ENCODE measurements at regions of chr4 and their contacts with region 1.

Region 1: DNA sequence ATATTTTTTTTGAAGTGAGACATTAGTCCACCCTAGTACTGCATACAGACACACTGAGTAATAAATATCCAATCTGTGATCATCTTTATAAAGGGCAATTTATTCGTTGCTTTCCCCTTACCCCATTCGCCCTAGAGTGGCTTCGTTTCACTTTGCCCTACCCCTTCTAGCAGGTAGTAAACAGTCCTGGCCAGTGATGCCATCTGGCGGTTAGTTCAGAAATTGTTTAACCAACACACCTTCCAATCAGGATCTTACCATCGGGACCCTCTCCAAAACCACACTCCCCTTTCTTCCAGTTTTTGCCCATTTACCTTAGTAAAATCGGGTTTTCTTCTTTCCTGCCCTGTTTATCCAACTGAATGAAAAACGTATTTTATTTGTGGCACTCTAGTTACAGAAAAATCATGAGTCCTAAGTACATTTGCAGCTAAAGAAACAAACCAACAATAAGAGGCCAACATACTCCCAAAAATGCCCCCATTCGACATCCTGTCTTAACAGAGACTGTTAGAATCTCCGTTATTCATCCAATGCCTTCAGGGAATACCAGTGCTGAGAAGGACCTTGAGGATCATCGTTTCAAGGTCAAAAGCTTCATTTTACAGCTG is 2.2 kb downstream of the PPA2 start:
- DNase-seq: peak; percentile 66
- ATAC-seq: peak; percentile 61
- H3K4me3 ChIP-seq: peak overlapping the region; percentile 93
- H3K27ac ChIP-seq: peak overlapping the region; percentile 92
- H3K4me1 ChIP-seq: no peaks in the 10 kb centered on the region
- H3K27me3 ChIP-seq: no peaks in the 10 kb centered on the region
- CTCF ChIP-seq: peak; percentile 71 to 83 (median 74)
- EP300 ChIP-seq: no peak
- POLR2A ChIP-seq: no peak
- RAD21 ChIP-seq: peak; percentile 95

Region 2: DNA sequence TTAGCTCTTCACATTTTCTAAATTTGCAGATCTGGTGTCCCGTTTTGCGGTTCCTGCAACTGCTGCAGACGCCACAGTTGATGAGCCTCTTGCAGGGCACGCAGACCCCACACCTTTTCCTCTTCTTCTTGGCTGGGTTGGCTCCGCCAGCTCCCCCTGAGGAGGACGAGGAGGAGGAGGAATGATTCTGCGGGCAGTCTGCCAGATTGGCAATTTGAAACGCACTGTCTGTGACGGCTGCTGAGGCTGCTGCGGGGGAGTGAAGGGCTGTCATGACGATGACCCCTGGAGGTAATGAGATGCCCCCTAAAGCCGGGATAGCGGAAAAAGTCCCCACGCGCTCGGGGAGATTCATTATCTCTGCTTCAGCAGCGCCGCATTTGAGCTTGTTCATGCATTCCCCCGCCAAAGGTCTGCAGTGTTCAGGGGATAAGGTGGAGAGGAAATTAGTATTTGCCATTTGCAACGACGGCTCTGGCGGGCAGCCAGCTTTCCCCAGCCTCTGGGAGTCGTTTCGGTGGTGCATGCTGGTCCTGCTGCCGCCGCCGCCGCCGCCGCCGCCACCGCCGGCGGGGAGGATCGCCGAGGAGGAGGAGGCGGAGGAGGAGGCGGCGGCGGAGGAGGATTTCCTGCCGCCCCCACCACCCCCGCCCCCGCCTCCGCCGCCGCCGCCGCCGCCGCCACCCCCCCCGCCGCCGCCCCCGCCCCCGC is 980.7 kb before region 1 on chr4:
- CTCF ChIA-PET with region 1: no interaction called
- POLR2A ChIA-PET with region 1: no interaction called
- RAD21 ChIA-PET with region 1: no interaction called
- SMC1A ChIA-PET with region 1: interaction called, 3 read pairs
- in situ Hi-C with region 1: no loop called
- intact Hi-C with region 1: loop called (anchors 5 kb)
- DNase-seq: no peak
- ATAC-seq: peak; percentile 7
- H3K4me3 ChIP-seq: peak overlapping the region; percentile 78
- H3K27ac ChIP-seq: peak overlapping the region; percentile 97
- H3K4me1 ChIP-seq: peaks cover 16% of the 10 kb centered on the region
- H3K27me3 ChIP-seq: no peaks in the 10 kb centered on the region
- CTCF ChIP-seq: no peak
- EP300 ChIP-seq: no peak
- POLR2A ChIP-seq: peak; percentile 63
- RAD21 ChIP-seq: no peak

Region 3: DNA sequence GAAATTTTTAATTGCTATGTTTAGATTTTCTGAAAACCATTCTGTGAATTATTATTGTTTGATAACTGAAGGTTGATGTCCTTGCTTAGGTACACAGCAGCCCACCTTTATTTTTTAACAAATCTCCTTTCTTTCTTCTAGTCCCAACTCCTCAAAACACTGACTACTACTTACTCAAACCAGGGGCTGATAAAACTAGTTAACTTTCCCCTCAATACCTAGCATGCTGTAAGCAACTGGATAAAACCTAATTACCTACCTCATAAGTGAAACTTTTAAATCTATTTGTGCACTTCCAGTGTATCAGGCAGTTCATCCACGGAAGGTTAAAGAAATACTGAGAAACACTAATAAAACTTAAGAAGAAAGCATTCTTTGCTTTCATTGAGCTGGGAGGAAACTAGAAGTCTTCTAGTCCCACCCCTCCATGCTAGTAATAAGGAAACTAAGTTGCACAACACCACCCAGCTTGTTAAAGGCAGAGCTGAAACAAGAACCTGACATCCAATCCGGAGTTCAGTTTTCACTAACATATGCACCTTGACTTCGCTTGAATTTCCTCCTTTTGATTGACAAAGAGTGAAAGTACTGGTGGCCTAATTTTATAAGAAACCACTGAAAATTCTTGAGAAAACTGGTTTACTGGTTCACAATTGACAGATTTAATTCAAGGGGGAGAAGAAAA is 505.2 kb before region 1 on chr4:
- CTCF ChIA-PET with region 1: interaction called, 3 read pairs
- POLR2A ChIA-PET with region 1: no interaction called
- RAD21 ChIA-PET with region 1: no interaction called
- SMC1A ChIA-PET with region 1: no interaction called
- in situ Hi-C with region 1: no loop called
- intact Hi-C with region 1: loop called (anchors 2 kb)
- DNase-seq: peak; percentile 96
- ATAC-seq: peak; percentile 95
- H3K4me3 ChIP-seq: peak overlapping the region; percentile 51; the same call in 1 of the 2 replicates
- H3K27ac ChIP-seq: peak overlapping the region; percentile 91
- H3K4me1 ChIP-seq: peaks cover 35% of the 10 kb centered on the region
- H3K27me3 ChIP-seq: no peaks in the 10 kb centered on the region
- CTCF ChIP-seq: no peak
- EP300 ChIP-seq: peak in 1 of 2 experiments; percentile 40; a peak in 1 of 4 replicates
- POLR2A ChIP-seq: no peak
- RAD21 ChIP-seq: peak; percentile 23; the same call in 1 of the 2 replicates

Region 4: GRCh38 chr4:105146276-105147015 is 325.2 kb before region 1 on chr4 and contains the start of gene TET2:
- CTCF ChIA-PET with region 1: interaction called, 51 read pairs
- POLR2A ChIA-PET with region 1: interaction called, 7 read pairs
- RAD21 ChIA-PET with region 1: interaction called, 22 read pairs
- SMC1A ChIA-PET with region 1: interaction called, 41 read pairs
- in situ Hi-C with region 1: no loop called
- intact Hi-C with region 1: loop called (anchors 1 kb)
- DNase-seq: peak; percentile 74
- ATAC-seq: peak; percentile 80
- H3K4me3 ChIP-seq: peak within 1 kb of the TSS; percentile 99
- H3K27ac ChIP-seq: peak within 1 kb of the TSS; percentile 96
- H3K4me1 ChIP-seq: no peaks in the 10 kb centered on the region
- H3K27me3 ChIP-seq: no peaks in the 10 kb centered on the region
- CTCF ChIP-seq: peak in 1 of 3 experiments; percentile 8; a peak in 1 of 6 replicates
- EP300 ChIP-seq: no peak; a peak in 1 of 4 replicates
- POLR2A ChIP-seq: peak; percentile 76
- RAD21 ChIP-seq: no peak; the same call in 1 of the 2 replicates
- polyA plus RNA-seq, gene TET2: 3.7 to 6.6 TPM

Region 5: GRCh38 chr4:105453550-105454205 is 18.0 kb before region 1 on chr4:
- CTCF ChIA-PET with region 1: interaction called, 28 read pairs
- POLR2A ChIA-PET with region 1: interaction called, 4 read pairs
- RAD21 ChIA-PET with region 1: interaction called, 10 read pairs
- SMC1A ChIA-PET with region 1: interaction called, 6 read pairs
- in situ Hi-C with region 1: no loop called
- intact Hi-C with region 1: no loop called
- DNase-seq: no peak
- ATAC-seq: peak; percentile 95
- H3K4me3 ChIP-seq: no peak overlapping the region
- H3K27ac ChIP-seq: no peak overlapping the region; the same call in 1 of the 2 replicates
- H3K4me1 ChIP-seq: no peaks in the 10 kb centered on the region
- H3K27me3 ChIP-seq: no peaks in the 10 kb centered on the region
- CTCF ChIP-seq: peak in 2 of 3 experiments; percentile 9 to 39; a peak in 2 of 6 replicates
- EP300 ChIP-seq: peak; percentile 66 to 72; a peak in 2 of 4 replicates
- POLR2A ChIP-seq: no peak
- RAD21 ChIP-seq: 0 out of 2 replicates have a peak, but pooled peaks have one; percentile 22

Region 6: GRCh38 chr4:105569057-105569865 is 97.6 kb after region 1 on chr4:
- CTCF ChIA-PET with region 1: no interaction called
- POLR2A ChIA-PET with region 1: no interaction called
- RAD21 ChIA-PET with region 1: no interaction called
- SMC1A ChIA-PET with region 1: no interaction called
- in situ Hi-C with region 1: no loop called
- intact Hi-C with region 1: no loop called
- DNase-seq: no peak
- ATAC-seq: no peak
- H3K4me3 ChIP-seq: no peak overlapping the region
- H3K27ac ChIP-seq: no peak overlapping the region
- H3K4me1 ChIP-seq: no peaks in the 10 kb centered on the region
- H3K27me3 ChIP-seq: no peaks in the 10 kb centered on the region
- CTCF ChIP-seq: no peak
- EP300 ChIP-seq: no peak
- POLR2A ChIP-seq: no peak
- RAD21 ChIP-seq: no peak

Region 7: DNA sequence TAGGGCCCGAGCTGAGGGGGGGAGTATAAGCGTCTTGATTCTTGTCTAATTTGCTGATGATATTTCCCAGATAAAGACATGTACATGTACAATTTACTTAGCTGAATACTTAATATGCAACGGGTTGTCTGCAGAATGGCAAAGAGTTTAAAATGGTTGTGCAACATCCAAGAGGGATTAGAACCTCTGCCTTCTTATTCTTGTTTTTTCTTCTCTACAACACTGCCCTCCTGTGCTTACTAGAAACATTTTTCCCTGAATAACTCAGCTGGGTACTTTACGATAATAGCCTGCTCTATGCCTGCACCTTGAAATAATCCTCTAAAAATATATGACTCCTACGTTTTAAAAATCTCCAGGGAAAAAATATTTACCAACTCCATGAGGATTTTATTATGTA is 195.0 kb after region 1 on chr4:
- CTCF ChIA-PET with region 1: interaction called, 33 read pairs
- POLR2A ChIA-PET with region 1: interaction called, 3 read pairs
- RAD21 ChIA-PET with region 1: interaction called, 15 read pairs
- SMC1A ChIA-PET with region 1: interaction called, 23 read pairs
- in situ Hi-C with region 1: no loop called
- intact Hi-C with region 1: no loop called
- DNase-seq: no peak
- ATAC-seq: peak; percentile 85
- H3K4me3 ChIP-seq: no peak overlapping the region
- H3K27ac ChIP-seq: no peak overlapping the region
- H3K4me1 ChIP-seq: no peaks in the 10 kb centered on the region
- H3K27me3 ChIP-seq: no peaks in the 10 kb centered on the region
- CTCF ChIP-seq: peak; percentile 28 to 44 (median 34); a peak in 4 of 6 replicates
- EP300 ChIP-seq: no peak
- POLR2A ChIP-seq: no peak
- RAD21 ChIP-seq: peak; percentile 72